Natural killer cell (primary cell): ENCODE measurements at regions of chr14 and their contacts with region 1.

Region 1: GRCh38 chr14:24431569-24432258 is 2.0 kb downstream of the KHNYN start:
- DNase-seq: peak; percentile 82 to 96
- ATAC-seq: peak; percentile 53 to 72 (median 57)
- H3K4me3 ChIP-seq: peak overlapping the region; percentile 93
- H3K4me3 Mint-ChIP-seq: peak overlapping the region; percentile 84
- H3K27ac ChIP-seq: peak overlapping the region; percentile 99
- H3K27ac Mint-ChIP-seq: peak overlapping the region; percentile 87 to 97
- H3K4me1 ChIP-seq: peaks cover 36% of the 10 kb centered on the region
- H3K4me1 Mint-ChIP-seq: peaks cover 18 to 45% of the 10 kb centered on the region in 2 donors
- H3K27me3 ChIP-seq: no peaks in the 10 kb centered on the region
- H3K27me3 Mint-ChIP-seq: no peaks in the 10 kb centered on the region
- CTCF ChIP-seq: peak; percentile 81

Region 2: DNA sequence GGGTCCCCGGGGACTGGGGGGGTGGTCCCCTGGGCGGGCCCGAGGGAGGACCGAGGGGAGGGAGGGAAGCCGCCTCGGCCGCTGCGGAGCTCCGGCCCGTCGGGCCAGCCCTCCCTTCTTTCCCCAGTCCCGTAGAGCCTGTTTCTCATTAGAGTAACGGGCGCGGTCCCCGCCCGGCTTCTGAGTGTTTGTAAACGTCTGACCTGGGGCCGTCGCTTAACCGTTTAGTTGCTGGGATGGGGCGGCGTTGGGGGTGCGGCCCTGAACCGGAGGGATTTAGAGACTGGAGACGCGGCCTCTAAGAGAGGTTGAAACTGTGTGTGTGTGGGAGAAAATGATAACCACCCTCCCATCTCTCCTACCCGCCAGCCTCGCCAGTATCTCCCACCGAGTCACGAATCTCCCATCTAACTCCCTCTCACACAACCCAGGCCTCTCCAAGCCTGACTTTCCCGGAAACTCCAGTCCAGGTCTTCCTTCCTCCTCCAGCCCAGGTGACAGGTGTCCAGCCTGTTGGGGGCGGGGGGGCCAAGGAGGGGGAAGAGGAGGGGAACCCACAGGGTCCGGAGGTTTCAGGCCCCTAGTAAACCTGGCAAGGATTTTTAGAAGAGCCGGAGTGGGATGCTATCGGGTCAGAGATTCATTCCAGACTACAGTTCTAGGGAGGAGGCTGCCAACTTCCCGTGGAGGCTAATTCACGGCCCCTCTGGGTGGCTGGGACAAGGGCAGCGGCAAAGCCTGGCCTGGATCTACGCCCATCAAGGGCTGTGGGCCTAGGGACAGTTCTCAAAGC is 64.8 kb before region 1 on chr14:
- intact Hi-C with region 1: loop called (anchors 1 kb)
- DNase-seq: peak; percentile 25 to 35
- ATAC-seq: peak; percentile 27 to 45 (median 36)
- H3K4me3 ChIP-seq: peak overlapping the region; percentile 27
- H3K4me3 Mint-ChIP-seq: peak overlapping the region; percentile 82
- H3K27ac ChIP-seq: no peak overlapping the region
- H3K27ac Mint-ChIP-seq: peak overlapping the region in 1 of 2 donors; percentile 53
- H3K4me1 ChIP-seq: peaks cover 37% of the 10 kb centered on the region
- H3K4me1 Mint-ChIP-seq: peaks cover 19 to 34% of the 10 kb centered on the region in 2 donors
- H3K27me3 ChIP-seq: peaks cover 39% of the 10 kb centered on the region
- H3K27me3 Mint-ChIP-seq: peaks cover 29 to 37% of the 10 kb centered on the region in 2 donors
- CTCF ChIP-seq: no peak

Region 3: GRCh38 chr14:24442273-24443052 is 10.7 kb after region 1 on chr14 and contains the start of gene SDR39U1:
- intact Hi-C with region 1: loop called (anchors 1 kb)
- DNase-seq: peak; percentile 88 to 100
- ATAC-seq: peak; percentile 88 to 97 (median 92)
- H3K4me3 ChIP-seq: peak within 1 kb of the TSS; percentile 92
- H3K4me3 Mint-ChIP-seq: peak within 1 kb of the TSS; percentile 91
- H3K27ac ChIP-seq: peak within 1 kb of the TSS; percentile 96
- H3K27ac Mint-ChIP-seq: peak within 1 kb of the TSS; percentile 97 to 98
- H3K4me1 ChIP-seq: peaks cover 25% of the 10 kb centered on the region
- H3K4me1 Mint-ChIP-seq: peaks cover 37 to 48% of the 10 kb centered on the region in 2 donors
- H3K27me3 ChIP-seq: no peaks in the 10 kb centered on the region
- H3K27me3 Mint-ChIP-seq: peaks cover 0 to 5% of the 10 kb centered on the region in 2 donors
- CTCF ChIP-seq: no peak
- total RNA-seq, gene SDR39U1: 97.1 to 106 (median 100) TPM

Region 4: DNA sequence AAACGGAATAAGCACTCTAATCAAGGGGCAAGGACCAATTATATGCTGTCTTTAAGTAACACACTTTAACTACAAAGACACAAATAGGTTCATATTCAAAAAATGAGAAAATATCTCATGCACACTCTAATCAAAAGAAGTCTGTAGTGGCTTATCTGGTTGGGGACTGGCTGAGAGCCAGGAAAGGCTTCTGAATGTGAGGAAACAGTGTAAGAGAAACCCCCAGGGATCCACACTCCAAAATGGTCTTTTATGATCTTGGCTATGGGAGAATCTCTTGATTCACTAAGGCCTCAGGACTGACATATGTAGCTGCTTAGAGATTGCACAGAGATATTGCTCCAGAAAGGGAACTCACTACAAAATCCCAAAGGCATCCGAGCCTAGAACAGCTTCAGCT is 134.1 kb after region 1 on chr14:
- intact Hi-C with region 1: no loop called
- DNase-seq: no peak
- ATAC-seq: no peak
- H3K4me3 ChIP-seq: no peak overlapping the region
- H3K4me3 Mint-ChIP-seq: no peak overlapping the region
- H3K27ac ChIP-seq: no peak overlapping the region
- H3K27ac Mint-ChIP-seq: peak overlapping the region in 1 of 2 donors; percentile 53
- H3K4me1 ChIP-seq: no peaks in the 10 kb centered on the region
- H3K4me1 Mint-ChIP-seq: peaks cover 28 to 45% of the 10 kb centered on the region in 2 donors
- H3K27me3 ChIP-seq: no peaks in the 10 kb centered on the region
- H3K27me3 Mint-ChIP-seq: no peaks in the 10 kb centered on the region
- CTCF ChIP-seq: no peak